OCI-LY7 (cell line): ENCODE measurements at regions of chr15 and their contacts with region 1.

Region 1: DNA sequence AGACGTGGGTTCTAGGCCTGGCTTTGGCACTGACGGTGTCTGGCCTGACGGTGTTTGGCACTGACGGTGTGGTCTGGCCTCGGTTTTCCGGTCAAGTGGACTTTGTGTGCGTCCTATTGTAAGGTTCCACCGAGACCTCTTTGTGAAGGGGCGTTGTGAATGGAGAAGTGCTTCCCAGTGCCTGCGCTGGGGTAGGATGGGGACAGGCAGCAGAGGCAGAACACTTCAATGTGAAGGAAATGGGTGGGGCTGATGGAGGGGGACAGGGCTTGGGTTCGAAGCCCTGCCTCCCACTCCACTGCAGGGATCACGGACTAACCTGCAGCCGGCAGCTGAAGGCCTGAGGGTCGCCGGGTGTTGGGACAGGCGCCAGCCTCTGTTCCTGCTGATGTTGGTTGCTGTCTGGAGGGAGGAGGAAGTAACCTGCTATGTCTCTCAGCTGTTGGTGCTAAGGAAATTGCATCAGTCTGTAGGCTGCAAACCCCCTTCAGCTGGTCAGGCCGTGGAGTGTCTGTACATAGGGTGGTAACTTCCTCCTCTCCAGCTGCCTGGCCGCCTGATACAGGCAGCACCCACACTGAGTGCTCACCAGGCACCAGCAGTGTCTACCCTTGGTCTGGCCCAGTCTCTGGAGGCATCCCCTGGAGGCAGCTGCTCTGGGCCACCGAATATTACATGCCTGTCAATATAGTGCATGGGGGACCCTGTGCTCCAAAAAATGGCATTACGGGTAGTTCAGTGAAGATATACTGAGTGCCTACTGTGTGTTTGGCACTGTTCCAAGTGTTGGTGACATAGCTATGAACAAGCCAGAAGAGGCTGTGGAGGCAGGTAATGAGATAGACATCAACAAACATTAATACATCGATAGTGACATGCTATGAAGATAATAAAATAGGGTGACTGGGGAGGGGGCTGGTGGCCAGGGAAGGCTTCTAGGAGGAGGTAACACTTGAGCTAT is 1.1 kb downstream of the TM6SF1 start:
- DNase-seq: peak; percentile 93
- H3K4me3 ChIP-seq: peak overlapping the region; percentile 74
- H3K27ac ChIP-seq: peak overlapping the region; percentile 74
- H3K4me1 ChIP-seq: peaks cover 23% of the 10 kb centered on the region
- CTCF ChIP-seq: no peak

Region 2: DNA sequence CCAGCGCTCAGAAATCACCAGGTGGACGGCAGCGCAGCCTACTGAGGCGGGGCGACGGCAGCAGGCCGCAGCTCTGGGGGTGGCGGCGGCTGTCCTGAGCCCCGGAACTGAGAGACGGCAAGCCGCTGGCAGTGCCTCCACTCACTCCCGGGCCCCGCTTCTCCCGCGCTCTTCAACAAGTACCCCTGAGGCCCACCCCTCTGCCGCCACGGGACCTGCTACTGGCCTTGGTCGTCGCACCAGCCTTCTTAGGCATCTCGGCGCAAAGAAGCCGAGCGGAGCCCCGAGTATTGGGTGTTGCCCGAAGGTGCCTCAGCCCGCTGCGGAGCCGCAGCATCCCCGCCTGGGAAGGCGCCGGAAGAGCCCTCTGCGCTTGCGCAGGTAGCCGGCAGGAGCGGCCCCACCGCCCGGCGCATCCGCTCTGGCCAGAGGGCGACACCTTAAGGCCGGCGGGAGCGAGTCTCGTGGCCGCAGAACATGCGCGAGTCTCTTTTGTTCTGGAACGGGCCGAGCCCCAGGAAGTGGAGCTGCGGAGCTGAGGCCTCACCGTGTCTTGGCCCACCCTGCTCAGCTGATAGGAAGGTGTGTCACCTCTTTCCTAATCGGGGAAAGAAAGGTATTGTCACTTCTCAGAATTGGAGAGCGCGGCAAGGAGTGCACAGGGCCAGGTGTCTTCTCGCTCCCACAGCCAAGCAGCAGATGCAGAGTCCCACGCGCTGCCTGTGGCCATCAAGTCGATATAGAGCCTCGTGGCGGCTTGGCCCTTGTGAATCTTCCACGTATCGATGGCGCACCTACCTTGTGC is 97.1 kb before region 1 on chr15 and contains the start of gene C15orf40:
- CTCF ChIA-PET with region 1: no interaction called
- POLR2A ChIA-PET with region 1: no interaction called
- intact Hi-C with region 1: loop called (anchors 1 kb)
- DNase-seq: peak; percentile 96
- H3K4me3 ChIP-seq: peak within 1 kb of the TSS; percentile 93
- H3K27ac ChIP-seq: peak within 1 kb of the TSS; percentile 74
- H3K4me1 ChIP-seq: peaks cover 23% of the 10 kb centered on the region
- CTCF ChIP-seq: peak; percentile 77
- total RNA-seq, gene C15orf40: 29.9 and 33.8 TPM in 2 replicates

Region 3: DNA sequence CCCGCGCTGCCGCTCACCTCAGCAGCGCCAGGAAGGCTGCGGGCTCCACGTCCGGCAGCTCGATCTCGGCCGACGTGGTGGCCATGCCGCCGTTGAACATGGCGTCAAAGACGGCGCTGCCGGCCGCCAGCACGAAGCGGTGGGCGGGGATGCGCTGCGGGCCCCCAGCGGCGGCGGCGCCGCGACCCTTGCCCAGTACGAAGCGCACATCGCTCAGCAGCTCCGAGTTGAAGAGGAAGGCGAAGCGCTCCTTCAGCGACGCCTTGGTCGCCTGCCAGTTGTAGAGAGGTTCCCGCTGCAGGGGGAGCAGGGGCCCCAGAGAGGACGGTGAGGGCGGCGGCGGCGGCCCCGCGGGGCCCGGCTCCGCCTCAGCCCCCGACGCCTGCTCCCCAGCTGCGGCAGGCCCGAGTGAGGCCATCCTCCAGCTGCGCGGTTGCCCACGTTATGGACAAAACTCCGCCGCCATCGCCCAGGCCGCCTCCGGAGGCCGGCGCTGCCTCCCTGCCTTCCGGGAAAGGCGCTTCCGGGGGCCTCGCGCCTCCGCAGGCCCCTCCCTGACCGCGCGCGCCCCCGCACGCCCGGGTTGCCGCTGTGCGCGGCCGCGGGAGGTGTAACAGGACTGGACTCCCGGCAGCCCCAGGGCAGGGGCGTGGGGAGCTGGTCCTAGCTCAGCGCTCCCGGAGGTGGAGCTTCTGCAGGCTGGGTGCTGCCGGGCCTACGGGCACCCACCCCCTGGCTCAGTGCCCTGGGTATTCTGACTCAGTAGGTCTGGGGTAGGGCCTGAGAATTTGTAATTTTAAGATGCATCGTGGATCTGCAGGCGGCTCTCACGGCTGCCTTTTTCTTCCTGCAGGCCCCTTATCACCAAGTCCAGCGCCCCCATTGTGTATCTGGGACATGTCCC is 41.6 kb before region 1 on chr15 and contains the start of gene BTBD1:
- CTCF ChIA-PET with region 1: no interaction called
- POLR2A ChIA-PET with region 1: interaction called, 17 read pairs
- intact Hi-C with region 1: loop called (anchors 1 kb)
- DNase-seq: peak; percentile 95
- H3K4me3 ChIP-seq: peak within 1 kb of the TSS; percentile 80
- H3K27ac ChIP-seq: peak within 1 kb of the TSS; percentile 82
- H3K4me1 ChIP-seq: peaks cover 44% of the 10 kb centered on the region
- CTCF ChIP-seq: peak; percentile 5; the same call in 1 of the 2 replicates
- total RNA-seq, gene BTBD1: 95.4 and 99.5 TPM in 2 replicates

Region 4: DNA sequence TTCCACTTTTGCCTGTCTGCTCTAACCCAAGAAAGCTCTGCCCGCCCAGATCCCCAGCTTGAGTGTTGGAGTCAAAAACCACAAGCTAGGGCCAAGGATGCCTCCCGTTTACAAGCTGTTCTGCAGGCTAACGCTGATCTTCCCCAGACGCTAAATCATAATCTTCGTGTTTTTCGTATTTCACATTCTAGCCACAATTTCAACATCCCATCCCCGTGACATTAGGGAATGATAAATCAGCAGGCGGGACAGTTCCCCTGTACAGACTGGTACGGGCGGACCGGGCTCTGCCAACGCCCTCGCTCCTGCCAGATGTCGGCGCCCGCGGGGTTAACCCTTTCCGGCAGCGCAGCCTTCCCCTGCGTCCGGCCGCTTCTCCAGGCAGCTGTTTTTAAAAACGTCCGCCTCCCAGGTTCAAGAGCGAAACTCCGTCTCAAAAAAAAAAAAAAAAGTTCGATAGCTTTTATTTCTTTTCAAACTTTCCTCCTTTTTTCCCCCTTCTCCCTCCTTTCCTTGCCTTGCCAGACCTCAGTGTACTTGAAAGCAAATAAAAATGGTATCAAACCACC is 256.9 kb after region 1 on chr15:
- CTCF ChIA-PET with region 1: no interaction called
- POLR2A ChIA-PET with region 1: no interaction called
- intact Hi-C with region 1: no loop called
- DNase-seq: no peak
- H3K4me3 ChIP-seq: no peak overlapping the region
- H3K27ac ChIP-seq: no peak overlapping the region
- H3K4me1 ChIP-seq: no peaks in the 10 kb centered on the region
- CTCF ChIP-seq: no peak